PC-9 (cell line): ENCODE measurements at regions of chr9 and their contacts with region 1.

Region 1: GRCh38 chr9:27276193-27277030 is 20.5 kb downstream of the EQTN start:
- DNase-seq: peak in 1 of 2 experiments; percentile 36
- H3K4me3 ChIP-seq: no peak overlapping the region
- H3K27ac ChIP-seq: no peak overlapping the region
- H3K4me1 ChIP-seq: no peaks in the 10 kb centered on the region
- H3K27me3 ChIP-seq: no peaks in the 10 kb centered on the region
- CTCF ChIP-seq: peak; percentile 77

Region 2: GRCh38 chr9:27247756-27248155 is 28.7 kb before region 1 on chr9:
- CTCF ChIA-PET with region 1: no interaction called
- POLR2A ChIA-PET with region 1: no interaction called
- intact Hi-C with region 1: loop called (anchors 2 kb)
- DNase-seq: peak; percentile 47 to 50
- H3K4me3 ChIP-seq: no peak overlapping the region
- H3K27ac ChIP-seq: no peak overlapping the region
- H3K4me1 ChIP-seq: 0 out of 2 replicates have a peak, but pooled peaks cover 4% of the 10 kb centered on the region
- H3K27me3 ChIP-seq: no peaks in the 10 kb centered on the region
- CTCF ChIP-seq: peak; percentile 64

Region 3: GRCh38 chr9:27688954-27689353 is 412.5 kb after region 1 on chr9:
- CTCF ChIA-PET with region 1: no interaction called
- POLR2A ChIA-PET with region 1: no interaction called
- intact Hi-C with region 1: no loop called
- DNase-seq: no peak
- H3K4me3 ChIP-seq: no peak overlapping the region
- H3K27ac ChIP-seq: no peak overlapping the region
- H3K4me1 ChIP-seq: no peaks in the 10 kb centered on the region
- H3K27me3 ChIP-seq: no peaks in the 10 kb centered on the region
- CTCF ChIP-seq: no peak

Region 4: DNA sequence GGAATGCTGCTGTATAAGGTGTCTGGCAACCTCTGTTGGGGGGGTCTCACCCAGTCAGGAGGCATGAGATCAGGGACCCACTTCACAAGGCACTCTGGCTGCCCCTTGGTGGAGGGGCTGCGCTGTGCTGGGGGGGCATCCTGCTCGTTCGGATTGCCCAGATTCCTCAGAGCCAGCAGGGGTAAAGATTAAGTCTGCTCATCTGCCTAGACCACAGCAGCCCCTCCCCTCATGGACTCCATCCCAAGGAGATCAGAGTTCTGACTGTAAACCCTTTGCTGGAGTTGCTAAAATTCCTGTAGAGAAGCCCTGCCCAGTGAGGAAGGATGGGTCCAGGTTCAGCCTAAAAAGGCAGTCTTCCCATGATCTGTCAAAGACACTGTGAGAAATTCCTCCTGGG is 558.9 kb after region 1 on chr9:
- CTCF ChIA-PET with region 1: no interaction called
- POLR2A ChIA-PET with region 1: no interaction called
- intact Hi-C with region 1: no loop called
- DNase-seq: no peak
- H3K4me3 ChIP-seq: no peak overlapping the region
- H3K27ac ChIP-seq: no peak overlapping the region
- H3K4me1 ChIP-seq: no peaks in the 10 kb centered on the region
- H3K27me3 ChIP-seq: no peaks in the 10 kb centered on the region
- CTCF ChIP-seq: no peak